AG04450 (cell line): ENCODE measurements at regions of chr1 and their contacts with region 1.

Region 1: DNA sequence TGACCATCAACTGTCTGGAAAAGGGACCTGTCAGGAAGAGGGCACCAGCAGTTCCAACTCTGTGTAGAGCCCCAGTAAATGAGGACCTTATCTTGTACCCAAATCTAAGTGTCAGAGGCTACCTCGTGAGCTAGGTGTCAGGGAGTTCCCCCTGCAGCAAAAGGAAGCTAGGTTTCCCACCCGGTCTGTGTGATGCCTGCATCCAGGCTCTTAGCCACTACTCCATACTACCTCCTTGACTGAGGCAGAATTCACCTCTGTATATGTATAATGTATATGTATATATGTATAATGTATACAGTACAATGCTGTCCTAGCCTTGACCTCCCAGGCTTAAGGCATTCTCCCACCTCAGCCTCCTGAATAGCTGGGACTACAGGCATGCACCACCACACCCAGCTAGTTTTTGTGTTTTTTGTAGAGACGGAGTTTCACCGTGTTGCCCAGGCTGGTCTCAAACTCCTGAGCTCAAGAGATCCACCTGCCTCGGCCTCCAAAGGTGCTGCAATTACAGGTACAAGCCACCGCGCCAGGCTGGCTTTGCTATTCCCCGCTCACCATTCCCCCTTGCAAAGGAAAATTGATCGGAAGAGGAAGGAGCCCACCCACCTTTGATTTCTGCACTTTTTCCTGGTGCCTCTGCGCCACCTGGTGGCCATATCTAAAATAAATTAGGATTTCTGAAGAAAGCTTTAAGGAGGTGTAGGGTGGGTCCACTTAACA is 15.7 kb upstream of the LUZP1 start:
- DNase-seq: no peak
- H3K4me3 ChIP-seq: peak overlapping the region; percentile 52
- H3K27ac ChIP-seq: no peak overlapping the region
- H3K27me3 ChIP-seq: peaks cover 2% of the 10 kb centered on the region
- CTCF ChIP-seq: peak; percentile 72

Region 2: DNA sequence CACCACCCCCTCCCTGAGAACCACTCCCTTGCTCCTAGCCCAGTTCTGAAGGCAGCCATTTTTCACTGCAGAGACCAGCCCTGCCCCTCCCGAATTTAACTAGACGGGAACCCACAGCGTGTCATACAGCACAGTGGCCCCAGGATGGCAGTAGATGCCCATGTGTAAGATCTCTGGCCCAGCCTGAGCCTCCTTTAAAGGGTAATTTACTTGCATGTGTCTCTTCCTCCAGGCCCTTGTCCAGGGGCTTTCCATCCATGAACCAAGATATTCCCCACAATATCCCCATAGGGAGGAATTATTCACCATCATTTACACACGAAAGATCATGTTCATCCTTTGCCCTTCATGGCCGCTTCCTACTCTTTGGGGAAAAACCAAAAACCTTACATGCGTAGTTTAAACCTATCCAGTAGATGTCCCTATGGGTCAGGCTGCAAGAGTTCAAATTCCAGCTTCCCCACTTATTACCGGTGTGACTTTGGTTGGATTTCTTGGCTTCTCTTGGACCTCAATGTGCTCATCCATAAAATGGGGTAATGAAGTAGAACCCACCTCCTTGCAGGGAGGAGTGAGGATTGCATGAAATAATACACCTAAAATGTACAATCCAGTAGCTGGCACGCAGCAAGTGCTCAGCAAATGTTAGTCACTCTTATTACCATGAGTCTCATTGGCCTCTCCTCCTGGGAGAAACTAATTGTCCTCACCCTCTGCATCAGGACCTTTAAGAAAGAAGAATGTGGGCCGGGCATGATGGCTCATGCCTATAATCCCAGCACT is 207.7 kb before region 1 on chr1:
- CTCF ChIA-PET with region 1: interaction called, 20 read pairs
- POLR2A ChIA-PET with region 1: no interaction called
- DNase-seq: peak; percentile 65
- H3K4me3 ChIP-seq: no peak overlapping the region
- H3K27ac ChIP-seq: no peak overlapping the region
- H3K27me3 ChIP-seq: peaks cover 12% of the 10 kb centered on the region
- CTCF ChIP-seq: peak; percentile 86

Region 3: DNA sequence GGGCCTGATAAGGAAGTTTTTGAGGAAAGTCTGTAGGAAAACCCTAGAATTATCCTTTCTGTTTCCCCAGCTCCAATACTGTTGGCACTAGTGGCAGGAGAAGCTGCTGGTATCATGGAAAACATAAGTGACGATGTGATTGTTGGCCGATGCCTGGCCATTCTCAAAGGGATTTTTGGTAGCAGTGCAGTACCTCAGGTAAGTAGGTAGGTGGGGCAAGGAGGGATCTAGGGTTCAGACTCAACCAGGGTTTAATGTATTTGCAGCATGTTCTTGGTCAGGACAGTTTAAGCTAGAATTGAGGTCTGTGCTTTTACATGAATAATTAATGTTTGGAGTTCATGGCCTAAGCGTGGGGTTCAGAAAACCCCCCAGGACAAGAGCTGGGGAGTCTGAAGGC is 103.0 kb before region 1 on chr1:
- CTCF ChIA-PET with region 1: interaction called, 10 read pairs
- POLR2A ChIA-PET with region 1: no interaction called
- DNase-seq: no peak
- H3K4me3 ChIP-seq: no peak overlapping the region
- H3K27ac ChIP-seq: no peak overlapping the region
- H3K27me3 ChIP-seq: no peaks in the 10 kb centered on the region
- CTCF ChIP-seq: no peak

Region 4: GRCh38 chr1:23098463-23099170 is 85.8 kb before region 1 on chr1:
- CTCF ChIA-PET with region 1: interaction called, 303 read pairs
- POLR2A ChIA-PET with region 1: interaction called, 9 read pairs
- DNase-seq: peak; percentile 58
- H3K4me3 ChIP-seq: no peak overlapping the region
- H3K27ac ChIP-seq: no peak overlapping the region
- H3K27me3 ChIP-seq: no peaks in the 10 kb centered on the region
- CTCF ChIP-seq: peak; percentile 98

Region 5: GRCh38 chr1:23118957-23119792 is 65.2 kb before region 1 on chr1:
- CTCF ChIA-PET with region 1: interaction called, 14 read pairs
- POLR2A ChIA-PET with region 1: no interaction called
- DNase-seq: no peak
- H3K4me3 ChIP-seq: no peak overlapping the region
- H3K27ac ChIP-seq: no peak overlapping the region
- H3K27me3 ChIP-seq: no peaks in the 10 kb centered on the region
- CTCF ChIP-seq: no peak

Region 6: GRCh38 chr1:23168457-23169194 is 15.7 kb before region 1 on chr1 and contains the start of gene LUZP1:
- CTCF ChIA-PET with region 1: interaction called, 36 read pairs
- POLR2A ChIA-PET with region 1: interaction called, 4 read pairs
- DNase-seq: no peak
- H3K4me3 ChIP-seq: peak within 1 kb of the TSS; percentile 83
- H3K27ac ChIP-seq: peak within 1 kb of the TSS; percentile 91
- H3K27me3 ChIP-seq: no peaks in the 10 kb centered on the region
- CTCF ChIP-seq: no peak
- polyA plus RNA-seq, gene LUZP1: 32.4 and 39.4 TPM in 2 replicates

Region 7: DNA sequence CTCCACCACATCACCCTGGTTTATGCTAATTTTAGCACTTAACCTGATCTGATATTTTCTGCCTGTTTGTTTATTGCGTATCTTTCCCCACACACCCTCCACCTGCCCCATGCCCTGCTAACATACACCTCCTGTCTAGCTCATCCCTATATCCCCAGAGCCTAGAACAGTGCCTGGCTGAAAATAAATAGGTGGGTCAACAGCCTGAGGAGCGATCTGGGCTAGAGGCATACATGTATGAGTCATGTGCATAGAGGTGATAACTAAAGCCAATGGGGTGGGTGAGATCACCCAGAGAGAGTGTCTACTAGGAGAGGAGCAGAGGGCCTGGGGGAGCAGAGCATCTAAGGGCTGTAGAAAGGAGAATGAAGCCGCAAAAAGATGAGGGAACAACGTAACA is 30.3 kb after region 1 on chr1:
- CTCF ChIA-PET with region 1: interaction called, 10 read pairs
- POLR2A ChIA-PET with region 1: no interaction called
- DNase-seq: no peak
- H3K4me3 ChIP-seq: no peak overlapping the region
- H3K27ac ChIP-seq: no peak overlapping the region
- H3K27me3 ChIP-seq: peaks cover 28% of the 10 kb centered on the region
- CTCF ChIP-seq: no peak

Region 8: GRCh38 chr1:23362218-23362713 is 177.9 kb after region 1 on chr1:
- CTCF ChIA-PET with region 1: no interaction called
- POLR2A ChIA-PET with region 1: no interaction called
- DNase-seq: no peak
- H3K4me3 ChIP-seq: no peak overlapping the region
- H3K27ac ChIP-seq: no peak overlapping the region
- H3K27me3 ChIP-seq: no peaks in the 10 kb centered on the region
- CTCF ChIP-seq: no peak